Caco-2 (cell line): ENCODE measurements at regions of chr1 and their contacts with region 1.

Region 1: DNA sequence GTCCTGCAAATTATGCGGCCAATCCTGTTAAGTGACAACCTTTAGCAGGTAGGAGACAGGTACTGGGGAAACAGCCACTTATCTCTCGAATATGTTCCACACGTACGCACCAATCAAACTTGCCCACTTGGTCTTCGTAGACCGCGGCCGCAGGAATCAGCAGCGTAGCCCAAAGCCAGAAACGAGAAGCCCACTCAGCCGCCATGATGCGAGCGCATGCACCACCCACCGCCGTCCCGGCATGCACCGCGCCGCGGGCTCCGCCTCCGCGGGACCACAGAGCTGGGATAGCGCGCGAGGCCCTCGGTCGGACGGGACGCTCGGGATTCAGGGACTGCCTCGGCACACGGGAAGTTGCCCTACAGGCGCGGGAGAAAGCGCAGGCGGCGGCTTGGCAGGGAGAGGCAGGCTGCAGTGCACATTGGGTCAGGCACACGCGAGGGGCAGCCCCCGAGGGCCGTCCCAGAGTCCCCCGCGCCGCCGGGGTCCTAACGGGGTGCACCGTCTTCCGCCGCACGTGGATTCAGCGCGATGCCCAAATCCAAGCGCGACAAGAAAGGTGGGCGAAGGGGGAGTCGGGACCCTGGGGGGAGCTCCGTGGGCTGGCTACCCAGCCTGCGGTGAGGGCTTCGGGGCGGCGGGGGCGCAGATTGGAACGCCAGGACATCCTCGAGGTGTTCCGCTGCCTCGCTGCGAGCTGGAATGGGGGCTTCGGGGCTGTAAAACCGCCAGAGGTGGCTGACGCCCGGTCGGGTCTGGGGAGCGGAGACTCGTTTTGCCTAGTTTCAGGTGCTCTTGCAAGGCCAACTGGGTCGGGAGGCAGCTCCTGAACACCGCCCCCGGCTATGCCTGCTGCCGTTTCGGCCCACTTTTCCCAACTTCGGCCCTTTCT is at the starts of genes EMC1 and MRTO4:
- DNase-seq: peak; percentile 88 to 93
- H3K4me3 ChIP-seq: peak within 1 kb of the TSS; percentile 95
- H3K4me3 Mint-ChIP-seq: peak within 1 kb of the TSS; percentile 97
- H3K27ac Mint-ChIP-seq: peak within 1 kb of the TSS; percentile 96
- H3K4me1 ChIP-seq: peaks cover 3% of the 10 kb centered on the region; the same call in 1 of the 2 replicates
- H3K4me1 Mint-ChIP-seq: peaks cover 9% of the 10 kb centered on the region
- H3K27me3 ChIP-seq: no peaks in the 10 kb centered on the region
- H3K27me3 Mint-ChIP-seq: no peaks in the 10 kb centered on the region
- CTCF ChIP-seq: no peak
- total RNA-seq, gene EMC1: 48.8 and 51.5 TPM in 2 replicates
- total RNA-seq, gene MRTO4: 52.6 TPM in 2 replicates

Region 2: DNA sequence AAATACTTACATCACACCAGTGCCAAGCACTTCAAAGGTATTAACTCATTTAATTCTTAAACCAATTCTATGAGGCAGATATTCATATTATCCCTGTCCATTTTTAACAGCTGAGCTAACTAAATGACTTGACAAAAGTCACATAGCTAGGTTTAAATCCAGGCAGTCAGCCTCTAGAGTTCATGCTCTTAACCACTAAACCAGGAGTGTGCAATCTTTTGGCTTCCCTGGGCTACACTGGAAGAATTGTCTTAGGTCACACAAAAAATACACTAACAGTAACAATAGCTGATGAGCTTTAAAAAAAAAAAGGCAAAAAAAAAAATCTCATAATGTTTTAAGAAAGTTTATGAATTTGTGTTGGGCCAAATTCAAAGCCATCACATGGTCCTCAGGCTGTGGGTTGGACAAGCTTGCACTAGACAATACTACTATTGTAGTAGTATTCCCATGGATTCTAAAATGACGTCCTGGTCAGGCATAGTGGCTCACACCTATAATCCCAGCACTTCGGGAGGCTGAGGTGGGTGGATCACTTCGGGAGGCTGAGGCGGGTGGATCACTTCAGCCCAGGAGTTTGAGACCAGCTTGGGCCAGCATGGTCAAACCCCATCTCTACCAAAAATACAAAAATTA is 51.5 kb before region 1 on chr1:
- CTCF ChIA-PET with region 1: no interaction called
- POLR2A ChIA-PET with region 1: no interaction called
- intact Hi-C with region 1: no loop called
- DNase-seq: no peak
- H3K4me3 ChIP-seq: no peak overlapping the region
- H3K4me3 Mint-ChIP-seq: no peak overlapping the region
- H3K27ac Mint-ChIP-seq: no peak overlapping the region
- H3K4me1 ChIP-seq: peaks cover 59% of the 10 kb centered on the region
- H3K4me1 Mint-ChIP-seq: peaks cover 43% of the 10 kb centered on the region
- H3K27me3 ChIP-seq: no peaks in the 10 kb centered on the region
- H3K27me3 Mint-ChIP-seq: no peaks in the 10 kb centered on the region
- CTCF ChIP-seq: no peak

Region 3: GRCh38 chr1:19209990-19210771 is 41.4 kb before region 1 on chr1 and contains the start of gene UBR4:
- CTCF ChIA-PET with region 1: no interaction called
- POLR2A ChIA-PET with region 1: no interaction called
- intact Hi-C with region 1: no loop called
- DNase-seq: peak; percentile 95
- H3K4me3 ChIP-seq: peak within 1 kb of the TSS; percentile 95
- H3K4me3 Mint-ChIP-seq: peak within 1 kb of the TSS; percentile 92
- H3K27ac Mint-ChIP-seq: peak within 1 kb of the TSS; percentile 90
- H3K4me1 ChIP-seq: peaks cover 28% of the 10 kb centered on the region
- H3K4me1 Mint-ChIP-seq: peaks cover 20% of the 10 kb centered on the region
- H3K27me3 ChIP-seq: no peaks in the 10 kb centered on the region
- H3K27me3 Mint-ChIP-seq: no peaks in the 10 kb centered on the region
- CTCF ChIP-seq: no peak
- total RNA-seq, gene UBR4: 317 and 318 TPM in 2 replicates

Region 4: GRCh38 chr1:19311959-19312781 is 60.6 kb after region 1 on chr1 and contains the starts of genes AKR7A2 and SLC66A1:
- CTCF ChIA-PET with region 1: no interaction called
- POLR2A ChIA-PET with region 1: no interaction called
- intact Hi-C with region 1: loop called (anchors 10 kb)
- DNase-seq: peak; percentile 82 to 95
- H3K4me3 ChIP-seq: peak within 1 kb of the TSS; percentile 93
- H3K4me3 Mint-ChIP-seq: peak within 1 kb of the TSS; percentile 84
- H3K27ac Mint-ChIP-seq: peak within 1 kb of the TSS; percentile 39
- H3K4me1 ChIP-seq: no peaks in the 10 kb centered on the region
- H3K4me1 Mint-ChIP-seq: peaks cover 15% of the 10 kb centered on the region
- H3K27me3 ChIP-seq: no peaks in the 10 kb centered on the region
- H3K27me3 Mint-ChIP-seq: no peaks in the 10 kb centered on the region
- CTCF ChIP-seq: no peak
- total RNA-seq, gene AKR7A2: 55.4 and 56.7 TPM in 2 replicates
- total RNA-seq, gene SLC66A1: 22.0 and 24.0 TPM in 2 replicates